ENCODE measurements at regions of chr15 and their contacts with region 1.

Region 1: GRCh38 chr15:76139368-76140073 is 79.7 kb downstream of the TMEM266 start:
- DNase-seq: peak; percentile 82 to 96
- H3K4me3 ChIP-seq: no peak overlapping the region
- H3K4me1 ChIP-seq: no peaks in the 10 kb centered on the region
- H3K27me3 ChIP-seq: peaks cover 5% of the 10 kb centered on the region

Region 2: GRCh38 chr15:75809986-75810750 is 329.4 kb before region 1 on chr15:
- in situ Hi-C with region 1: loop called (anchors 10 kb)
- DNase-seq: peak; percentile 73 to 79
- H3K4me3 ChIP-seq: no peak overlapping the region
- H3K4me1 ChIP-seq: peaks cover 3% of the 10 kb centered on the region; the same call in 1 of the 2 replicates
- H3K27me3 ChIP-seq: no peaks in the 10 kb centered on the region

Region 3: DNA sequence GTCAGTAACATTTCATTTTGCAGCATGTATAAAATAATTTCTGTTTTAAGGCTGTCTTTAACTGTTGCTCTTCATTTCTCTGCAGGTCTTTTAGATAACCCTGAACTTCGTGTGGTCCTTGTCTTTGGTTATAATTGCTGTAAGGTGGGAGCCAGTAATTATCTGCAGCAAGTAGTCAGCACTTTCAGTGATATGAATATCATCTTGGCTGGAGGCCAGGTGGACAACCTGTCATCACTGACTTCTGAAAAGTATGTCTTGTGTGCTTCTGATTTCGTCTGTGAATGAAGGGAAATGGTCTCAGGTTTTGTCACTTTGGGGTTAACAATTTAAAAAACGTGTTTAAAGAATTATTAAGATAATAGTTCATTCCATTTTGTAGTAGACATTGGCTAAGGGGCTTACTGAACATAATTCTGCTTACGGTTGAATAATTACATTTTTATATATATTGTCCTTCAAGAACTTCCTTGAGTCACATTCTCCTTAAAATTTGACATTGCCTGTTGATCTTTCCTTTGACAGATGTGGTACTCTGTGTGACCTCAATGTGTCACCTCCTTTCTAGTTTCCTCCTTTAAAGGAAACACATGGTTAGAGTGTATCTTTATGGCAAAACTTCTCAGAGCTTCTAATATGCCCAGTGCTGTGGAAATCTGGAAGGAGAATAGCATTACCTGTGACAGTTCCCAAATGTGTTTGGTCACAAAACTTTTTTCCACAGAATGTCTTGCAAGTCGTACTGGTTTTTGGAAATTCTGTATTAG is 209.5 kb before region 1 on chr15:
- in situ Hi-C with region 1: loop called (anchors 5 kb)
- DNase-seq: no peak
- H3K4me3 ChIP-seq: no peak overlapping the region
- H3K4me1 ChIP-seq: peaks cover 6% of the 10 kb centered on the region
- H3K27me3 ChIP-seq: no peaks in the 10 kb centered on the region

Region 4: GRCh38 chr15:76059320-76060117 is 80.0 kb before region 1 on chr15 and contains the start of gene TMEM266:
- in situ Hi-C with region 1: loop called (anchors 5 kb)
- DNase-seq: peak; percentile 78 to 84
- H3K4me3 ChIP-seq: peak within 1 kb of the TSS; percentile 53
- H3K4me1 ChIP-seq: peaks cover 7% of the 10 kb centered on the region
- H3K27me3 ChIP-seq: peaks cover 33% of the 10 kb centered on the region

Region 5: DNA sequence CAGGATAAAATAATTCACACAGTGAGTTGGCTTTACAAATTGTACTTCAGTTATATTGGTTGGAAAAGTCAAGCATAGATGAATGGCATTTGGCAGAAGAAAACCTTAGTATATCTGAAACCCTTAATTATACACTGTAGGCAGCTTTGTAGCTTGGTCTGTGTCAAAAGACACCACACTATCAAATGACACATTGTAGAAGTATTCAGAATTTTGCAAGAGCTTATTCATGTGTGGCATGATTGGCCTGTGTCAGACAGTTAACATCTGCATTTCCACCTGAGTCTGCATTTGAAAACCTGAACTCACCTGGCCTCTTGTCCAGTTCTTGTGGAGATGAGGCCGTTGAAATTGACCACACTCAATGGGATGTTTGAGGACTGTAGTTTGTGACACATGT is 65.9 kb before region 1 on chr15:
- in situ Hi-C with region 1: no loop called
- DNase-seq: no peak
- H3K4me3 ChIP-seq: no peak overlapping the region
- H3K4me1 ChIP-seq: no peaks in the 10 kb centered on the region
- H3K27me3 ChIP-seq: no peaks in the 10 kb centered on the region

Region 6: DNA sequence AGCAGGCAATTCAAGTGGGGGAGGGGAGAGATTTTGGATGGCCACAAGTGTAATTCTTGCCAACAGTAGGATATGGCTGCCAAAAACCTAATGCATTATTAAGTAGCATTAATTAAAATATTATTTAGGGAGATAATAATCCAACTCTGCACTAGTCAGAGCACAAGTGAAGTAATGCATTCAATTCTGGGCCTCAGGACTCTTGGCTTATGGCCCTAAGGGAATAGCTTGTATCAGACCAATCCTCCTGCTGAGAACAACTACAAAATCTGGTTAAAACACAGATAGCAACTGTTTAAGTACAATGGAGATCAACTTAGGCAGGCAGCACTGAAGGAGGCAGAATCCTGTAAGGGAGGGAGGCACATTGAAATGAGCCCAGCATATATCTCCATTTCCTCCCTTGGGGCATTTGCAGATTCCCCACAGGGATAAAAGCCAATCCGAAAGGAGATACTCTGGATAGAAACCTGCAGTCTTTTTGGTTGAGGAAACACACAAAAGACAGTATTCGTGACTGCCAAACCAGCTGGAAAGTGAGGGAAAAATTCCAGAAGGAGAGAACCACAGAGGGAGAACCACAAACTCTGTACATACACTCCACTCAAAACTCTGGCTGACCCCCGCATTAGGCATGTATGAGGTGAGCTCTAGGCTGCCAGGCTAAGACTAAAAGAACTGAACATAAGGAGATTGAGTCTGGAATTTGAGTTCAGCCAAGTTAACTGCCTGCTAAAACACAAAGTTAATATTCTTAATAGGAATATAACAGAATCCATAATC is 114.4 kb after region 1 on chr15:
- in situ Hi-C with region 1: no loop called
- DNase-seq: peak; percentile 62 to 76
- H3K4me3 ChIP-seq: no peak overlapping the region
- H3K4me1 ChIP-seq: peaks cover 22% of the 10 kb centered on the region
- H3K27me3 ChIP-seq: no peaks in the 10 kb centered on the region